GM10248 (cell line): ENCODE measurements at regions of chr5 and their contacts with region 1.

Region 1: GRCh38 chr5:148666353-148666752 is 12.0 kb upstream of the HTR4 start:
- DNase-seq: no peak
- CTCF ChIP-seq: no peak

Region 2: DNA sequence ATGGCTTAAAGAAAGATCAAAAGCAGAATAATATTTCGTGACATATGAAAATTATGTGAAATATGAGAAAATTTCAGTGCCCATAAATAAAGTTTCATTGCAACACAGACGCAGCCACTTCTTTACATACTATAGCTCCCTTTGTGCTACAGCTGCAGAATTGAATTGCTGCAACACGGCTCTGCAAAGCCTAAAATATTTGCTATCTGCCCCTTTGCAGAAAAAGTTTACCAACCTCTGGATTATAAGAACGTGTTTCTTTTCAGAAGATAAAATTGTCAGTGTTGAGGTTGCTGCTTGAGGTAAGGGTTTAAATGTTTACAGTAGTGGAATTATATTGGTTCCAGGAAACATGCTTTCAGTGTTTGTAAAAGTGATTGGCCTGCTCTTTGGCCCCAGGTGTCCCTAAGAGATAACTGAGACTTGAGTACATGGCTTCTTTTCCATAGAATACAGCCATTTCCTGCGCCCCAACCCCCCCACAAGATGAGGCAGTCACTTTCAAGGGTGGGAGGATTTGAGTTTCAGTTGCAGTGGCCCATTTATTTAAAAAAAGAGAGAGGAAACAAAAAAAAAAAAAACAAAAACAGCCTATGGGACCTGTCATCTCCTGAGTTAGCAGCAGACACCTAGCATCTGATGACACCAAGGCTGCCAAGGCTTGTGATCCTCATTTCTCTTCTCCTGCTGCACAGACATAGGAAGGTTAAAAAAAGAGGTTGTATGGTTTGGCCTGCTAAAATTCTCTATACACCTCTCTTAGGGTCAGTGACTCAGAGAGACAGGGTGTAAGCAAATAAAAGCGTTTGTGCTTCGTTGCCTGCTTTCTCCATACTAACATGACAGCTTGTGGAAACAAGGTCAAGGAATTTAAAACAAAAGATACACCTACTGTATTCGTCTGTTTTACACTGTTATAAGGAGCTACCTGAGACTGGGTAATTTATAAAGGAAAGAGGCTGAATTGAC is 16.0 kb after region 1 on chr5:
- CTCF ChIA-PET with region 1: interaction called, 10 read pairs
- POLR2A ChIA-PET with region 1: no interaction called
- DNase-seq: no peak
- CTCF ChIP-seq: no peak

Region 3: GRCh38 chr5:148805326-148806290 is 139.3 kb after region 1 on chr5:
- CTCF ChIA-PET with region 1: no interaction called
- POLR2A ChIA-PET with region 1: no interaction called
- DNase-seq: peak; percentile 30
- CTCF ChIP-seq: no peak